ENCODE measurements at regions of chr3 and their contacts with region 1.

Region 1: GRCh38 chr3:50365080-50365841 is 5.9 kb upstream of the TMEM115 start:
- DNase-seq: peak; percentile 57 to 87
- H3K4me3 ChIP-seq: peak overlapping the region; percentile 65 to 73
- H3K27ac ChIP-seq: peak overlapping the region in 1 of 2 donors; percentile 56
- H3K4me1 ChIP-seq: peaks cover 0 to 14% of the 10 kb centered on the region in 2 donors
- H3K27me3 ChIP-seq: no peaks in the 10 kb centered on the region
- CTCF ChIP-seq: no peak

Region 2: DNA sequence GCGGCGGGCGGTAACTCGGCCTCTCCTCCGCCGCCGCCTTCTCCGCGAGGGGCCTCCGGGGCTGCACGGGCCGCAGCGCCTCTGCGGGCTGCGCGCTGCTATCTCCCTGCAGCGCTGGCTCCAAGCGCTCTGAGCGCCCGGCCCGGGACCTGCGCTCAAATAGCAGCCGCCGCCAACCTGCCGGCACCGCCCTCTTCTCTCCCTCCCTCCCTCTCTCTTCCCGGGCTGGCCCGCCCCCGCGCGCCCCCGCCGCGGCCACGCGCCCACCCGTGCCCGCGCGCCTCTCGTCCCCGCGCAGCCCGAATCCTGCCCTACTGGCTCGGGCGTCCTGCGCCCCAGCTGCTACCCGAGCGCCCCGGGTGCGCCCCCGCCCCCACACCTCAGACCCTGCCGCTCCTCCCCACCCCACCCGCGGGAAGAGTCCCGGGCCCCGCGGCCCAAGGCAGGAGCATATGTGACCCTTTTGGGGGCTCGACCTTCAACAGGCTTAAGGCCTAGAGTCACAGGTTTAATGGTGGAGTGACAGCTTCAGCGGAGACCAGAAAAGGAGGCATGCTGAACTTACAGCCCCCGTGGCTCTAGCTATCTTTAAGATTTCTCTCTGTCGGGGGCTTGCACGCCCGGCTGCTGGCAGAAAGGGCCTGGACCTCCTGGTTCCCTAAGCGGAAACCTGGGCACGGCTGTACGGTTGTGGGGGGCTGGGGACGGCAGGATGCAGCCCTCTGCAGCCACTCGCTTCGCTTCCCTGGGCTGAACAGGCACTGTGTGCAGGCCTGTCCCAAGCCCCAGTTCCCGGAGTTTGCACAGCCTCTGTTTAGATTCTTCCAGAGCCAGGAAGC is 138.5 kb after region 1 on chr3 and contains the start of gene CACNA2D2:
- intact Hi-C with region 1: loop called (anchors 2 kb)
- DNase-seq: peak in 1 of 2 donors; percentile 66
- H3K4me3 ChIP-seq: peak within 1 kb of the TSS; percentile 80 to 81
- H3K27ac ChIP-seq: peak within 1 kb of the TSS in 1 of 2 donors; percentile 44
- H3K4me1 ChIP-seq: peaks cover 0 to 2% of the 10 kb centered on the region in 2 donors
- H3K27me3 ChIP-seq: no peaks in the 10 kb centered on the region
- CTCF ChIP-seq: no peak
- total RNA-seq, gene CACNA2D2: 0.85 TPM

Measured in ascending aorta (tissue), 2 donors.